HEK293 (cell line): ENCODE measurements at regions of chr22 and their contacts with region 1.

Region 1: GRCh38 chr22:46798366-46799350 is 36.2 kb downstream of the TBC1D22A start:
- H3K4me3 ChIP-seq: no peak overlapping the region
- H3K27ac ChIP-seq: no peak overlapping the region
- H3K4me1 ChIP-seq: 0 out of 2 replicates have a peak, but pooled peaks cover 2% of the 10 kb centered on the region
- CTCF ChIP-seq: peak; percentile 89

Region 2: GRCh38 chr22:46737976-46738646 is 60.5 kb before region 1 on chr22 and contains the start of gene CERK:
- CTCF ChIA-PET with region 1: interaction called, 11 read pairs
- POLR2A ChIA-PET with region 1: no interaction called
- H3K4me3 ChIP-seq: peak within 1 kb of the TSS; percentile 73
- H3K27ac ChIP-seq: peak within 1 kb of the TSS; percentile 86
- H3K4me1 ChIP-seq: peaks cover 38% of the 10 kb centered on the region
- CTCF ChIP-seq: no peak

Region 3: GRCh38 chr22:46774253-46774979 is 24.2 kb before region 1 on chr22:
- CTCF ChIA-PET with region 1: interaction called, 30 read pairs
- POLR2A ChIA-PET with region 1: interaction called, 15 read pairs
- H3K4me3 ChIP-seq: no peak overlapping the region
- H3K27ac ChIP-seq: peak overlapping the region; percentile 68
- H3K4me1 ChIP-seq: peaks cover 33% of the 10 kb centered on the region
- CTCF ChIP-seq: no peak

Region 4: DNA sequence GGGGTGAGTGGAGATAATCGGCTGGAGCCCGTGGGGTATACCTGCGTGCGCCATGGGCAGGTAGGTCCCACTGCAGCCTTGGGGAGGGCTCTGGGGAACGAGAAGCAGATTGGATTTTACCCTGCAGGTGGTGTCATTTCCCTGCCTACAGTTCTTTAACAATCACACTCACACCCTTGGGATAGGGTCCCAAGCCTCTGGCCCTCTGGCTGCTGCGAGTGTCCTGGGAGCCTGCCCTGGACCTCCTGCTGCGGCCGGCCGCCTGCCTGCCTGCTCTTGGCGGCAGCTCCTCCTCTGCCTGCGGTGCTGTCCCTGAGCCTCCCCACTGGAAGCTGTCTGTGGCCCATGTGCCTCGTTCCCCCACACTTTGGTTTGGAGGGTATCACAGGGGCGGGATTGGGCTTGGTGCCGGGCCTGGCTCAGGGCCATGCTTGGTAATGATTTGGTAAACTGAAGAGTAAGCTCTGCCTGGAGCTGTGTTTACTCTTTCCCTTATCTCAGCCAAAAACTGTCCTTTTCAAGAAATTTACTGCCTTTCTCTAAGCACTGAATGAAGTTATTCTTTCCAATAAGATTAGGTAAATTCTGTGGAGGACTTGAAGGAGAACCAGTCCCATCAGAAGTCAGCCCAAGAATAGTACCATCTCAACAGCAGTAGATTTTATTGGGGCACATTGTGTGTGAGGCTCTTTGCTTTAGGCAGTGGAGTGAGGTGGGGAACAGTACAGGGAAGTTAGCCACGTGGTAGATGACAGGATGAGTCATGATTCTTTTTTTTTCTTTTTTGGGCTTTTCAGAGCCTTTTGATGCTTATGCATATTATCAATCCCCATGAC is 17.5 kb after region 1 on chr22:
- CTCF ChIA-PET with region 1: interaction called, 62 read pairs
- POLR2A ChIA-PET with region 1: no interaction called
- H3K4me3 ChIP-seq: no peak overlapping the region
- H3K27ac ChIP-seq: peak overlapping the region; percentile 0; the same call in 1 of the 2 replicates
- H3K4me1 ChIP-seq: peaks cover 15% of the 10 kb centered on the region; the same call in 1 of the 2 replicates
- CTCF ChIP-seq: no peak; the same call in 1 of the 2 replicates